ENCODE measurements at regions of chr5 and their contacts with region 1.

Region 1: DNA sequence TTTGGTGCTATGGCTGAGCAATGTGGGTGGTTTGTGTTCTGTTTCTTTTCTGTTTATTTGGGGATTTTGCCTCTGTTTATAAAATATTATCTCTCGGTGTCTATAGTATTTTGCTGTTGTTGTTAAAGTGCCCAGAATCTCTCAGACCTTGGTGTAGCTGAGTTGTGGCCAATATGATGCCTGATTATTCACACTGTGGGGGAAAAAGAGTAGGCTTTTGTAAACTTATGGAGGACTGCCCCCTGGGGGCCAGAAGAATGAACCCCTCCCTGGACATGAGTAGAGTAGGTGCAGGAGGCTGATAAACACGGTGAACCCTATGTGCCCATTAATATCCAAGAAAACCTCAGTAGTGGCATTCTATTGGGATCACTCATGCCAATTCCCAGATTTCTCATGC is 49.0 kb upstream of the DPYSL3 start:
- DNase-seq: no peak
- ATAC-seq: peak; percentile 98
- H3K4me3 ChIP-seq: no peak overlapping the region
- H3K27ac ChIP-seq: no peak overlapping the region
- H3K4me1 ChIP-seq: no peaks in the 10 kb centered on the region
- H3K27me3 ChIP-seq: no peaks in the 10 kb centered on the region
- CTCF ChIP-seq: peak; percentile 35 to 61 (median 48); a peak in 5 of 6 replicates
- EP300 ChIP-seq: no peak
- POLR2A ChIP-seq: no peak
- RAD21 ChIP-seq: peak; percentile 72

Region 2: GRCh38 chr5:147156012-147156411 is 402.8 kb before region 1 on chr5:
- CTCF ChIA-PET with region 1: no interaction called
- POLR2A ChIA-PET with region 1: no interaction called
- RAD21 ChIA-PET with region 1: no interaction called
- SMC1A ChIA-PET with region 1: no interaction called
- in situ Hi-C with region 1: no loop called
- intact Hi-C with region 1: no loop called
- DNase-seq: no peak
- ATAC-seq: no peak
- H3K4me3 ChIP-seq: no peak overlapping the region
- H3K27ac ChIP-seq: no peak overlapping the region
- H3K4me1 ChIP-seq: no peaks in the 10 kb centered on the region
- H3K27me3 ChIP-seq: no peaks in the 10 kb centered on the region
- CTCF ChIP-seq: no peak
- EP300 ChIP-seq: no peak
- POLR2A ChIP-seq: no peak
- RAD21 ChIP-seq: no peak

Region 3: GRCh38 chr5:147223948-147224791 is 334.7 kb before region 1 on chr5:
- CTCF ChIA-PET with region 1: interaction called, 3 read pairs
- POLR2A ChIA-PET with region 1: no interaction called
- RAD21 ChIA-PET with region 1: no interaction called
- SMC1A ChIA-PET with region 1: no interaction called
- in situ Hi-C with region 1: no loop called
- intact Hi-C with region 1: loop called (anchors 5 kb)
- DNase-seq: no peak
- ATAC-seq: peak; percentile 86
- H3K4me3 ChIP-seq: no peak overlapping the region
- H3K27ac ChIP-seq: no peak overlapping the region
- H3K4me1 ChIP-seq: no peaks in the 10 kb centered on the region
- H3K27me3 ChIP-seq: no peaks in the 10 kb centered on the region
- CTCF ChIP-seq: peak; percentile 36 to 58 (median 39); a peak in 5 of 6 replicates
- EP300 ChIP-seq: no peak
- POLR2A ChIP-seq: no peak
- RAD21 ChIP-seq: peak; percentile 56

Region 4: GRCh38 chr5:147321569-147321968 is 237.3 kb before region 1 on chr5:
- CTCF ChIA-PET with region 1: no interaction called
- POLR2A ChIA-PET with region 1: no interaction called
- RAD21 ChIA-PET with region 1: no interaction called
- SMC1A ChIA-PET with region 1: no interaction called
- in situ Hi-C with region 1: no loop called
- intact Hi-C with region 1: no loop called
- DNase-seq: no peak
- ATAC-seq: no peak
- H3K4me3 ChIP-seq: no peak overlapping the region
- H3K27ac ChIP-seq: no peak overlapping the region
- H3K4me1 ChIP-seq: no peaks in the 10 kb centered on the region
- H3K27me3 ChIP-seq: no peaks in the 10 kb centered on the region
- CTCF ChIP-seq: no peak
- EP300 ChIP-seq: no peak
- POLR2A ChIP-seq: no peak
- RAD21 ChIP-seq: no peak

Region 5: DNA sequence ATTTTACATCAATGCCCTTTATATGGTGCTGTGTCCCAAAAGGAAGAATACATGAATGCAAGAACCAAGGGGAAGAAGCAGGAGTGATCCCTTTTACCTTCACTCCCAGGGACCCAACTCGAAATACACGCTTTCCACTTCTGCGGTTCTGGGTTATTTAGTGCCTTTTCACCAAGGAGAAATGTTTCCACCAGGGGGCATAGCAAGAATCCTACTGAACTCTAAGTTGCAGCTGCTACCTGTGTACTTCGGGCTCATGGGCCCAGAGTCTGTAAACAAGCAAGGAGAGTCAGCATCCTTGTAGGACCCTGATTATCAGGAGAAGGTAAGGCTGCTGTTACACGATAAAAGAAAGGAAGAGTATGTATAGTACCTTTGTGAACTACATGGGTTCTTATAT is 94.6 kb before region 1 on chr5:
- CTCF ChIA-PET with region 1: interaction called, 21 read pairs
- POLR2A ChIA-PET with region 1: no interaction called
- RAD21 ChIA-PET with region 1: interaction called, 7 read pairs
- SMC1A ChIA-PET with region 1: interaction called, 8 read pairs
- in situ Hi-C with region 1: no loop called
- intact Hi-C with region 1: loop called (anchors 1 kb)
- DNase-seq: no peak
- ATAC-seq: peak; percentile 93
- H3K4me3 ChIP-seq: no peak overlapping the region
- H3K27ac ChIP-seq: no peak overlapping the region
- H3K4me1 ChIP-seq: no peaks in the 10 kb centered on the region
- H3K27me3 ChIP-seq: no peaks in the 10 kb centered on the region
- CTCF ChIP-seq: peak in 2 of 3 experiments; percentile 31 to 37; a peak in 3 of 6 replicates
- EP300 ChIP-seq: no peak
- POLR2A ChIP-seq: no peak
- RAD21 ChIP-seq: peak; percentile 61; the same call in 1 of the 2 replicates

Measured in GM12878 (cell line).